ENCODE measurements at regions of chr7 and their contacts with region 1.

Region 1: GRCh38 chr7:74401137-74401859 is 52.4 kb upstream of the GTF2IRD1 start:
- DNase-seq: peak; percentile 54 to 88 (median 74)
- H3K4me3 ChIP-seq: no peak overlapping the region
- H3K27ac ChIP-seq: no peak overlapping the region
- H3K4me1 ChIP-seq: no peaks in the 10 kb centered on the region
- H3K27me3 ChIP-seq: no peaks in the 10 kb centered on the region
- CTCF ChIP-seq: peak; percentile 89 to 98 (median 92)
- POLR2A ChIP-seq: no peak

Region 2: DNA sequence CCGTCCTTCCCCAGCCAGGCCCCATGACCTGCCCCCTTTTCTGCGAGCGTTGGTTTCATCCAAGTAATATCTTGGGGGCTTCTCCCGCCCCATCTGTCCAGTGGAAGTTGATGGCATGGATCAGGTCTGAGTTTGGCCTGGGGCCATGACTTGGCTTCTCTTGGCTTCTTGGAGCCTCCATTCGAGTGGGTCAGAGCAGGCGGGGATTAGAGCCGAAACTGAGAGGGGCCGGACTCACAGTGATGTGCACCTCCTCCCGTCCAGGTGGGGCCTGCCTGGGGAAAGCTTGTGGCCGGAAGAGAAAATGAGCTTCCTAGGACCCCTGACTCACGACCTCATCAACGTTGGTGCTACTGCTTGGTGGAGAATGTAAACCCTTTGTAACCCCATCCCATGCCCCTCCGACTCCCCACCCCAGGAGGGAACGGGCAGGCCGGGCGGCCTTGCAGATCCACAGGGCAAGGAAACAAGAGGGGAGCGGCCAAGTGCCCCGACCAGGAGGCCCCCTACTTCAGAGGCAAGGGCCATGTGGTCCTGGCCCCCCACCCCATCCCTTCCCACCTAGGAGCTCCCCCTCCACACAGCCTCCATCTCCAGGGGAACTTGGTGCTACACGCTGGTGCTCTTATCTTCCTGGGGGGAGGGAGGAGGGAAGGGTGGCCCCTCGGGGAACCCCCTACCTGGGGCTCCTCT is 332.8 kb before region 1 on chr7:
- intact Hi-C with region 1: loop called (anchors 5 kb)
- DNase-seq: no peak
- H3K4me3 ChIP-seq: no peak overlapping the region
- H3K27ac ChIP-seq: no peak overlapping the region
- H3K4me1 ChIP-seq: no peaks in the 10 kb centered on the region
- H3K27me3 ChIP-seq: no peaks in the 10 kb centered on the region
- CTCF ChIP-seq: no peak
- POLR2A ChIP-seq: no peak

Region 3: GRCh38 chr7:74206589-74207120 is 194.6 kb before region 1 on chr7:
- intact Hi-C with region 1: loop called (anchors 2 to 5 kb)
- DNase-seq: peak; percentile 78 to 96 (median 91)
- H3K4me3 ChIP-seq: peak overlapping the region in 1 of 4 donors; percentile 40
- H3K27ac ChIP-seq: no peak overlapping the region
- H3K4me1 ChIP-seq: peaks cover 0 to 4% of the 10 kb centered on the region in 2 donors
- H3K27me3 ChIP-seq: no peaks in the 10 kb centered on the region
- CTCF ChIP-seq: peak; percentile 94 to 97 (median 97)
- POLR2A ChIP-seq: no peak

Region 4: GRCh38 chr7:74289659-74290514 is 111.4 kb before region 1 on chr7:
- intact Hi-C with region 1: loop called in 1 of 2 experiments (anchors 10 kb)
- DNase-seq: peak in 5 of 7 donors; percentile 44 to 66 (median 51)
- H3K4me3 ChIP-seq: peak overlapping the region; percentile 40 to 98 (median 50)
- H3K27ac ChIP-seq: peak overlapping the region in 3 of 5 donors; percentile 39 to 87 (median 76)
- H3K4me1 ChIP-seq: peaks cover 25 to 36% of the 10 kb centered on the region in 2 donors
- H3K27me3 ChIP-seq: no peaks in the 10 kb centered on the region
- CTCF ChIP-seq: peak in 1 of 6 experiments; percentile 3
- POLR2A ChIP-seq: no peak

Region 5: GRCh38 chr7:74466196-74466813 is 65.0 kb after region 1 on chr7:
- intact Hi-C with region 1: no loop called
- DNase-seq: peak; percentile 48 to 91 (median 80)
- H3K4me3 ChIP-seq: no peak overlapping the region
- H3K27ac ChIP-seq: peak overlapping the region in 4 of 5 donors; percentile 9 to 88 (median 70)
- H3K4me1 ChIP-seq: peaks cover 6 to 8% of the 10 kb centered on the region in 2 donors
- H3K27me3 ChIP-seq: no peaks in the 10 kb centered on the region
- CTCF ChIP-seq: no peak
- POLR2A ChIP-seq: peak in 1 of 2 donors; percentile 55

Region 6: GRCh38 chr7:74479961-74480829 is 78.9 kb after region 1 on chr7:
- intact Hi-C with region 1: no loop called
- DNase-seq: peak; percentile 92 to 98 (median 96)
- H3K4me3 ChIP-seq: peak overlapping the region in 2 of 4 donors; percentile 23 to 44
- H3K27ac ChIP-seq: peak overlapping the region; percentile 69 to 98 (median 97)
- H3K4me1 ChIP-seq: peaks cover 58 to 60% of the 10 kb centered on the region in 2 donors
- H3K27me3 ChIP-seq: no peaks in the 10 kb centered on the region
- CTCF ChIP-seq: peak in 1 of 6 experiments; percentile 16
- POLR2A ChIP-seq: peak; percentile 59 to 82